Transverse colon (tissue), 4 donors: ENCODE measurements at regions of chr12 and their contacts with region 1.

Region 1: GRCh38 chr12:2034633-2035430 is 18.0 kb upstream of the CACNA1C start:
- DNase-seq: peak; percentile 93
- H3K4me3 ChIP-seq: peak overlapping the region in 2 of 4 donors; percentile 16 to 38
- H3K27ac ChIP-seq: peak overlapping the region; percentile 18 to 78 (median 44)
- H3K4me1 ChIP-seq: peaks cover 0 to 13% (median 8%) of the 10 kb centered on the region in 4 donors
- H3K27me3 ChIP-seq: peaks cover 8% of the 10 kb centered on the region
- CTCF ChIP-seq: peak; percentile 63 to 96 (median 92)
- EP300 ChIP-seq: no peak
- POLR2A ChIP-seq: no peak

Region 2: DNA sequence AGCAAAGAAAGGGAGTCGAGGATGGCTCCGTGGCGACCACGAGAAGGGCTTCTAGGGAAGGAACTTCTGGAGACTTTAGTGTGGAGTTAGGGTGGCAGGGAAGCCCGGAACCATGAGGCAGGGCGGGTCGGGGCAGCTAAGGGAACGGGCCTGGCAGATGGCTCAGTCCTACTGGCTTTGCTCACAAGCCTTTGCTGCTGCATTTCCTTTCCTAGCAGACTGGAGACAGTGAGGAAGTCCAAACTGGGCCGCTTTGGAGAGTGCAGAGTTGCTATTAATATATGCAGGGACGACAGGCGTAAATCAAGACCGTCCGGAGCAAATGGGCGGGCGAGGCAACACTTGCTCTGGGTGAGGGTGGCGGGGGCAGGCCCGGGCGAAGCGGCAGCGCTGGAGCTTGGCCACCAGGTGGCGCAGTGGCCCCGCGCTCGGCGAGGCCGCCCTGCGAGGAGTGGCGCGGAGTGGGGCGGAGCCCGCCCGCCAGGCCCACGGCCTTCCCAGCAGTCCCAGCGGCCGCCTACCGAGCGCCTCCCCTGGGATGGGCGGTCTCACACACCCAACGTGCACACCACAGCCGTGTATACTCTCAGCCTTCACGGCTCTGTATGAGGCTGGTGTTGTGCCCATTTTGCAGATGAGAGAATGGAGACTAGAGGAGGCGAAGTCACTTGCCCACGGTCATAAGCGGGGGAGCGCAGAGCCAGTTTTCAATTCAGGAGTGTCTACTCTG is 238.9 kb before region 1 on chr12:
- in situ Hi-C with region 1: loop called in 2 of 4 experiments (anchors 25 kb)
- intact Hi-C with region 1: loop called (anchors 5 kb)
- DNase-seq: peak; percentile 96
- H3K4me3 ChIP-seq: peak overlapping the region; percentile 55 to 72 (median 62)
- H3K27ac ChIP-seq: peak overlapping the region; percentile 87 to 90 (median 88)
- H3K4me1 ChIP-seq: peaks cover 10 to 25% (median 16%) of the 10 kb centered on the region in 4 donors
- H3K27me3 ChIP-seq: no peaks in the 10 kb centered on the region
- CTCF ChIP-seq: peak; percentile 72 to 99 (median 95)
- EP300 ChIP-seq: no peak
- POLR2A ChIP-seq: peak; percentile 82

Region 3: GRCh38 chr12:1804545-1805332 is 230.1 kb before region 1 on chr12:
- in situ Hi-C with region 1: loop called in 2 of 4 experiments (anchors 25 kb)
- intact Hi-C with region 1: loop called (anchors 5 kb)
- DNase-seq: peak; percentile 90
- H3K4me3 ChIP-seq: no peak overlapping the region
- H3K27ac ChIP-seq: peak overlapping the region in 1 of 4 donors; percentile 21
- H3K4me1 ChIP-seq: peaks cover 0 to 4% (median 0%) of the 10 kb centered on the region in 4 donors
- H3K27me3 ChIP-seq: no peaks in the 10 kb centered on the region
- CTCF ChIP-seq: no peak
- EP300 ChIP-seq: no peak
- POLR2A ChIP-seq: no peak

Region 4: GRCh38 chr12:1972856-1973317 is 61.9 kb before region 1 on chr12:
- in situ Hi-C with region 1: no loop called
- intact Hi-C with region 1: loop called (anchors 2 kb)
- DNase-seq: peak; percentile 41
- H3K4me3 ChIP-seq: no peak overlapping the region
- H3K27ac ChIP-seq: peak overlapping the region; percentile 78 to 84 (median 82)
- H3K4me1 ChIP-seq: peaks cover 0 to 49% (median 8%) of the 10 kb centered on the region in 4 donors
- H3K27me3 ChIP-seq: no peaks in the 10 kb centered on the region
- CTCF ChIP-seq: no peak
- EP300 ChIP-seq: peak; percentile 72
- POLR2A ChIP-seq: no peak